ENCODE measurements at regions of chr11 and their contacts with region 1.

Region 1: DNA sequence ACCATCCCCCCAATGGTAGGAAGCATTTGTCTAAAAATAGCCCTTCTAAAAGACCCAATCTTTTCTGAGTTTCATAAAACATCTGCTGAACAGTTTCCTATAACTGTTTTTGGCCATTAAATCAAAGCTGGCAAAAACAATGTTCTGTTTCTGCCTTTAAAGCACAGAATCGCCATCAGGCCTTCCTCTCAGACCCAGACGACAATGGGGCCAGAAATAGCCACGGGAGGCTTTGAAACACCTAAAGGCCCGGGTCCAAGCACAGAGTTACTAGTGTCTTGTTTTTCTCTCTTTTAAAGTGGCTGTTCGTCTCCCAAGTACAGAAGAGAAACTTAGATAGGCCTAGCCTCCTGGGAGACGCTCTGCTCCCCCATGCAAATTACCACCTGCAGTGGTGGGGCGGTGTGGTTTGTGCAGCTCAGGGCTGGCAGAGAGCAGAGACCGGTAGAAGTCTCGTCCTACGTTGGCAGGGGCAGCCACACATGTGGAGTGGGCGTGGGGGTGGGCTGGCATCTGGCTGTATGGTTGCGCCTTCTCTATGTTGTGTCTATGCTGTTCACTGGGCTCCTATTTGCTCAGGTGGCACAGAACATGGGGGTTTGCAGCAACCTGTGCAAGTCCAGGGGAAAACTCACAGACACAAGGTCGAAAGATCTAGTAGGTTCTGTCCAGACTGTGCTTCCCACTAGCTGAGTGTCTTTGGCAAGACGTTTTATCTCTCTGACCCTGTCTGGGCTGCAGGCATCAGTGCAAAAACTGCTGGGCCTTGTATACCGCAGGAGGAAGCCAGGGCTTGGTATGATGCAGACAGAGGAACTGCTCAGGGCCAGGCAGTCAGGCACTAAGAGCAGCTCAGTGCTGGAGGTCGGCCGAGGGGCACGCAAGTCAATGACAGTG is 23.6 kb upstream of the ETS1 start:
- DNase-seq: peak; percentile 69
- ATAC-seq: peak; percentile 90
- H3K4me3 Mint-ChIP-seq: peak overlapping the region; percentile 61
- H3K27ac Mint-ChIP-seq: peak overlapping the region; percentile 83
- H3K4me1 Mint-ChIP-seq: peaks cover 42% of the 10 kb centered on the region
- H3K27me3 Mint-ChIP-seq: no peaks in the 10 kb centered on the region

Region 2: DNA sequence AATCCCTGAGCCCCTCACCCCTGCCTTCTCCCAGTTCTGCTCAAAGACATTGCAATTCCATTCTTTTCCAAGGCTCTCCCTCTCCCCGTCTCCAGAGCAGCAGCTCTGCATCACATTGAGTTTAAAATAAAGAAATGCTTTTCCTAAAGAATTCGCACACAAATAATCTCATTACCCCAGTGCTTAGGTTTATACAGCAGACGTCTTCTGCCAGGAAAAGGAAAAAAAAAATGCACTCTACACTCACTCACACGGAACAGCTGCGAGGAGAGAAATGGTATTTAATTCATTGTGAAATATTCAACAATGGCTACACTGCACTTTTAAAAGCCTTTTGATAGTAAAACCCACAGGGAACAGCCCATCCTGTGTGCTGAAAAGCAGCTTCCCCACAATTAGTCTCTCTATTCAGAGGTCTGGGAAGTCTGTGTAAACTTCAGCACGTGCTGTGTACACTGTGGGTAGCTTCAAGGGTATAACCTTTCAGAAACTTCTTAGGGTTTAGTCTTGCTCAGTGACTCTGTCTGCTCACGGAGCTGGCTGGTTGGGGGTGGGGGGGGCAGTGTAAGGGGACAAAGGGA is 66.4 kb before region 1 on chr11:
- CTCF ChIA-PET with region 1: interaction called, 3 read pairs
- POLR2A ChIA-PET with region 1: interaction called, 11 read pairs
- DNase-seq: no peak
- ATAC-seq: peak; percentile 21
- H3K4me3 Mint-ChIP-seq: peak overlapping the region; percentile 20
- H3K27ac Mint-ChIP-seq: no peak overlapping the region
- H3K4me1 Mint-ChIP-seq: peaks cover 46% of the 10 kb centered on the region
- H3K27me3 Mint-ChIP-seq: no peaks in the 10 kb centered on the region

Region 3: GRCh38 chr11:128716661-128717210 is 105.8 kb after region 1 on chr11:
- CTCF ChIA-PET with region 1: no interaction called
- POLR2A ChIA-PET with region 1: no interaction called
- DNase-seq: peak; percentile 74
- ATAC-seq: peak; percentile 78
- H3K4me3 Mint-ChIP-seq: peak overlapping the region; percentile 76
- H3K27ac Mint-ChIP-seq: peak overlapping the region; percentile 97
- H3K4me1 Mint-ChIP-seq: peaks cover 97% of the 10 kb centered on the region
- H3K27me3 Mint-ChIP-seq: no peaks in the 10 kb centered on the region

Region 4: GRCh38 chr11:129041611-129042018 is 430.6 kb after region 1 on chr11:
- CTCF ChIA-PET with region 1: no interaction called
- POLR2A ChIA-PET with region 1: no interaction called
- DNase-seq: no peak
- ATAC-seq: no peak
- H3K4me3 Mint-ChIP-seq: no peak overlapping the region
- H3K27ac Mint-ChIP-seq: no peak overlapping the region
- H3K4me1 Mint-ChIP-seq: no peaks in the 10 kb centered on the region
- H3K27me3 Mint-ChIP-seq: no peaks in the 10 kb centered on the region

Measured in activated CD8-positive, alpha-beta T cell treated with anti-CD3 and anti-CD28 coated beads, Interleukin-2, amount 10 ng/mL, durations not matched to agents 7 days and 5 days (primary cell).